ENCODE measurements at regions of chr5 and their contacts with region 1.

Region 1: GRCh38 chr5:104951829-104952228 is 1389.2 kb upstream of the NUDT12 start:
- DNase-seq: no peak
- ATAC-seq: no peak
- H3K4me3 ChIP-seq: no peak overlapping the region
- H3K4me3 Mint-ChIP-seq: no peak overlapping the region
- H3K27ac ChIP-seq: no peak overlapping the region
- H3K27ac Mint-ChIP-seq: no peak overlapping the region
- H3K4me1 ChIP-seq: no peaks in the 10 kb centered on the region
- H3K4me1 Mint-ChIP-seq: no peaks in the 10 kb centered on the region
- H3K27me3 ChIP-seq: no peaks in the 10 kb centered on the region
- H3K27me3 Mint-ChIP-seq: no peaks in the 10 kb centered on the region

Region 2: DNA sequence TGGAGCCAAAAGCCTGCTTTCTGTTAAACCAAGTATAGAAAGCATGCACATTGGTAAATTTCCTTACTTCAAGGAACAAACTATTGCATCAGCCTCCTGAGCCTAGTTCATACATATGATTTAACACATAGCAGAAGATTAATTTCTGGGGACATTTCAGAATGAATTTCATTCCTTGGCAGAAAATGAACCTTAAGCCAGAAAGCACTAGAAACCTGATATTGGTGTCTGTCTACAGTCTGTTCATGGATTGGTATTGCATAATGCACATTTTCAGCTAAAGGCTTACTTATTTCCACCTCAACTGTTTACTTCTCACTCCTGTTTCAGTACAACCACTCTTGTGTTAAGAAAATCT is 82.5 kb after region 1 on chr5:
- CTCF ChIA-PET with region 1: no interaction called
- POLR2A ChIA-PET with region 1: interaction called in 1 of 2 experiments, 11 read pairs
- DNase-seq: no peak
- ATAC-seq: no peak
- H3K4me3 ChIP-seq: no peak overlapping the region
- H3K4me3 Mint-ChIP-seq: no peak overlapping the region
- H3K27ac ChIP-seq: no peak overlapping the region
- H3K27ac Mint-ChIP-seq: no peak overlapping the region
- H3K4me1 ChIP-seq: no peaks in the 10 kb centered on the region
- H3K4me1 Mint-ChIP-seq: no peaks in the 10 kb centered on the region
- H3K27me3 ChIP-seq: no peaks in the 10 kb centered on the region
- H3K27me3 Mint-ChIP-seq: no peaks in the 10 kb centered on the region

Region 3: DNA sequence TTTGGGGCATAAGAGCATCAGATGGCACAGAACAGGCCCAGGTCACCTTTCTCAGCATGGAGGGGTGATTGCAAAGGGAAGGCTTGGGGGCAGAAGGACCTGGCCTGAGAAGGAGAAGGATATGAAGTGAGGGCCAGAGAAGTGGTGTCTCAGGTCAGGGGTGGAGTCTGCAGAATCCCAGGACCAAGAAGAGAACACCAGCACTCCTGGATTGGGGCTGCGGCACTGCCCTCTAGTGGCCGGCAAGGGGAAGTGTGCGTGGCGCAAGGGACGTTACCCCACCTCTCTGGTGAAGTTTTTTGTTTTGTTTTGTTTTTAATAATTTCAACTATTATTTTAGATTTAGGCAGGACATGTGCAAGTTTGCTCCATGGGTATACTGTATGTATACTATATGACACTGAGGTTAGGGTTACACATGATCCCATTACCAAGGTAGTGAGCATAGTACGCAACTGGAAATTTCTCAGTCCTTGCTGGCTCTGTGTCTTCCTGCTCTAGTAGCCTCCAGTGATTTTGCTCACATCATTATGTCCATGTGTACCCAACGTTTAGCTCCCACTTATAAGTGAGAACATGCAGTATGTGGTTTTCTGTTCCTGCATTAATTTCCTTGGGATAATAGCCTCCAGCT is 1170.3 kb after region 1 on chr5:
- CTCF ChIA-PET with region 1: no interaction called
- POLR2A ChIA-PET with region 1: interaction called in 1 of 2 experiments, 12 read pairs
- DNase-seq: no peak
- ATAC-seq: no peak
- H3K4me3 ChIP-seq: no peak overlapping the region
- H3K4me3 Mint-ChIP-seq: no peak overlapping the region
- H3K27ac ChIP-seq: no peak overlapping the region
- H3K27ac Mint-ChIP-seq: no peak overlapping the region
- H3K4me1 ChIP-seq: no peaks in the 10 kb centered on the region
- H3K4me1 Mint-ChIP-seq: no peaks in the 10 kb centered on the region
- H3K27me3 ChIP-seq: no peaks in the 10 kb centered on the region
- H3K27me3 Mint-ChIP-seq: no peaks in the 10 kb centered on the region